ENCODE measurements at regions of chr7 and their contacts with region 1.

Region 1: DNA sequence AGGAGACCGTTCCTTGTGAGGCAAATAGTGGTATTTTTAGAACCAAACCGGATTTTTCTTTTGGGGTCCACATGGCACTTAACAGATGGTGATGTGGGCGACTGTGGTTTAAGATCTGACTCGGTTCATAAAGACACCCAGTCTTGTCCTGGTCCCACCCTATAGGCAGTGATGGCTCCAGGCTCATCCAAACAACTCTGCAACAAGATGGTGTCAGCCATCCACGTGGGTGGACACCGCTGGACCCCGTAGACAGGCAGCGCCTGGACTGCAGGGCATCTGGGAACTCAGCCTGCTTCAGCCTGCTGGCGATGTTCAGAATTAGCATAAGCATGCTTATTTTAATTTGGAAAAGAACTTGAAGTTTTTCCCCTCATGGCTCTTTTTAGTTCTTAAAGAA is 258.4 kb upstream of the FZD1 start:
- DNase-seq: no peak

Region 2: GRCh38 chr7:90972906-90973550 is 32.8 kb before region 1 on chr7:
- intact Hi-C with region 1: no loop called
- DNase-seq: no peak

Region 3: DNA sequence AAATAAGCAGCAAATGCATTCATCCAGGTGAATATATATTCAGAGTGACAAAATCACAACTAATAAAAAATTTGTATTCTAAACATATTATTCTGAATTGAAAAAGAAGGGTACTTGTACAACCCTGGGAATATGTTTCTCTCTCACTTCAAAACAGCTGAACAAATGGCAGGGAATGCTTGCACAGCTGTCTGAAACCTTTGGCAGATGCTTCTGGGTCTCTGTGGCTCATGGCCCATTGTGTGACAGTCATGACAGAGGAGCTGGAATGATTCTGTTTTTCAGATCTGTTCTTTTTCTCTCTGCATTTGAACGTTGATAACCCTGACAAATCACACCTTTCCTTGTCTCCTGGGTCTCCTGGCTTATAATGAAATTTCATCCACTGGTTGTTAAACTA is 17.3 kb before region 1 on chr7:
- intact Hi-C with region 1: loop called in 1 of 2 experiments (anchors 2 kb)
- DNase-seq: no peak